Esophagus squamous epithelium (tissue), 5 donors: ENCODE measurements at regions of chr1 and their contacts with region 1.

Region 1: DNA sequence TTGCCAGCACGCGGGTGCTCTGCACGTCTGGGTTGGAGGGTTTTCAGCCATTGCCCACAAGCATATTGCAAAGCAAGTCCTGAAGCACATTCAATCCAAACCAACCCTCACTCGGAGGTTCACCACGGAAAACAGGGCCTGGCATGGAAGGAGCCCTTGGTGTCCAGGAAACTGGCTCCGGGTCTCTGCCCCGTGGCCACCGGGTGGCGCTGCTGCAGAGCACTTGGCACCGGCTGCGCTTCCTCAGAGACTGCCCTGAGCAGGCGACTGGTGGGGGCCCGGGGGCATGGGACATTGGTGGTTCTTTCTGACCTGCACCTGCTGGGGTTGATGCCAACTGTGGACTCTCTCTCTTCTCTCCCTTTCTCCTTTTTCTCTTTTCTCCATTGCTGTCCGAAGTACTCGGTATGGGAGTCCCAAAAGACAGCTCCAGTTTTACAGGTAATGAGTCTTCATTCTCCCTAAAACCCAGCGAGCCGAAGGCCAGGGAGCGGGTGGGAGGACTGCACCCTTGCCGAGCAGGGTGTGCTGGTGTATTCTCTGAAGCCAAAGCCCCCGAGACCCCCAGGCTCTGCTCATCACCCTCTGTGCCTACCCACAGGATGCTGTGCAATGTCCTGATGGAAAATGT is 4.1 kb upstream of the KCNAB2 start:
- DNase-seq: no peak
- H3K4me3 ChIP-seq: no peak overlapping the region
- H3K27ac ChIP-seq: no peak overlapping the region
- H3K4me1 ChIP-seq: no peaks in the 10 kb centered on the region
- H3K27me3 ChIP-seq: peaks cover 0 to 26% (median 0%) of the 10 kb centered on the region in 4 donors
- CTCF ChIP-seq: peak; percentile 15 to 69 (median 38)
- POLR2A ChIP-seq: no peak

Region 2: DNA sequence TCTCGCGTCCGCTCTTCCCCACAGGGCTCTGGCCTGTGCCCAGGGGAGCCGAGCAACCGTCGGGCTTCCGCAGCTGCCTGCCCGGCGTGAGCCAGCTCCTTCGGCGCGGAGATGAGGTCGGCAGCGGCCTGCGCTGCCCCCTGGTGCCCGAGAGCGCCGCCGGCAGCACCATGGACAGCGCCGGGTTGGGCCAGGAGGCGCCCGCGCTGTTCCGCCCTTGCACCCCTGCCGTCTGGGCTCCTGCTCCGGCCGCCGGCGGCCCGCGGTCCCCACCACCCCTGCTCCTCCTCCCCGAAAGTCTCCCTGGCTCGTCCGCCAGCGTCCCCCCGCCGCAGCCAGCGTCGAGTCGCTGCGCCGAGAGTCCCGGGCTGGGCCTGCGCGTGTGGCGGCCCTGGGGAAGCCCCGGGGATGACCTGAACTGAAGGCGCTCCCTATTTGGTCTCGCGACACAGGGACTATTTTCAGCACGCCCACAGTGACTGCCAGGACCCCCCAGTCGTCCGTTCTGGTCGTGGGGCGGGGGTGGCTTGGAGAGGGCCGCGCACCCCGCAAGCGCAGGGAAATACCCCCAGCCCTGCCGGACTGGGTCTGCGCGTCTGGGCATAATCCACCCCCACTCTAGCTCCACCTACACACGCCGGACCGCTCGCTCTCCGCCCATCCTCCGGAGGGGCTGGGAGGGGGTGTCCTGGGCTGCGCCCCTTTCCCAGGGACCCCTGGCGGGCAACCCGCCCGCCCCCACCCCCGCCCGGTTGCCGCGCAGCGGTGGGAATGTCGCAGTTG is 203.7 kb after region 1 on chr1:
- intact Hi-C with region 1: loop called (anchors 10 kb)
- DNase-seq: no peak
- H3K4me3 ChIP-seq: peak overlapping the region in 2 of 4 donors; percentile 18 to 37
- H3K27ac ChIP-seq: no peak overlapping the region
- H3K4me1 ChIP-seq: peaks cover 29 to 62% (median 40%) of the 10 kb centered on the region in 3 donors
- H3K27me3 ChIP-seq: peaks cover 25 to 100% (median 52%) of the 10 kb centered on the region in 4 donors
- CTCF ChIP-seq: peak; percentile 67 to 95 (median 88)
- POLR2A ChIP-seq: no peak